Cardiac septum (tissue), 1 donor: ENCODE measurements at regions of chr2 and their contacts with region 1.

Region 1: DNA sequence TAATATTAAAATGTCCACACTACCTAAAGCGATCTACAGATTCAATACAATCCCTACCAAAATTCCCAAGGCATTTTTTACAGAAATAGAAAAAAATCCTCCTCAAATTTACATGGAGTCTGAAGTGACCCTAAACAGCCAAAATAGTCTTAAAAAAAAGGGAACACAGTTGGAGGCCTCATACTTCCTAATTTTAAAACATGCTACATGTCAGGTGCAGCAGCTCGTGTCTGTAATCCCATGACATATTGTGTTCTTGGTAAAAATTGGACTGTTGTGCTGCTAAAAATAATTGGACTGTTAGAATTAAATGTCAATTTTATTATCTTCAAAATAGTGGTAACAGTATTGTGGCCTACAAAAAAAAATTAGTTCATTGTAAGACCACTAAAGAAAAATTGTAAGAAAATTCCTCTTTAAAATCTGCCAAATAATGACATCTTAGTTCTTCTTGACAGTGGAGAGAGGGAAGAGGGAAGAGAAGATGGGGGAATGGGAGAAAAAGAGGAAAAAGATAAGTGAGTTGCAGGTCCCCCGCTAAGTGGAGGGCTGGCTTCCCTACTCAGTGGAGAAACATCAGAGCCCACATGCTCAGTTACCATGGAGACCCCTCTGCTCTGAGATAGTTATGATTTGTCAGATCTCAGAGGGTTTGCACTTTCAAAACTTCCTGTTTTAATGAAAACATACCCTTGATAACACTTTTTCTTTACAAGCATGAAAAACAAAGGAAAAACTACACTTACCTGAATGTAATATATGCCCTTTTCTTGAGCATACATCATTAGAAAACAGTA is 46.5 kb downstream of the UNC50 start:
- DNase-seq: no peak

Region 2: DNA sequence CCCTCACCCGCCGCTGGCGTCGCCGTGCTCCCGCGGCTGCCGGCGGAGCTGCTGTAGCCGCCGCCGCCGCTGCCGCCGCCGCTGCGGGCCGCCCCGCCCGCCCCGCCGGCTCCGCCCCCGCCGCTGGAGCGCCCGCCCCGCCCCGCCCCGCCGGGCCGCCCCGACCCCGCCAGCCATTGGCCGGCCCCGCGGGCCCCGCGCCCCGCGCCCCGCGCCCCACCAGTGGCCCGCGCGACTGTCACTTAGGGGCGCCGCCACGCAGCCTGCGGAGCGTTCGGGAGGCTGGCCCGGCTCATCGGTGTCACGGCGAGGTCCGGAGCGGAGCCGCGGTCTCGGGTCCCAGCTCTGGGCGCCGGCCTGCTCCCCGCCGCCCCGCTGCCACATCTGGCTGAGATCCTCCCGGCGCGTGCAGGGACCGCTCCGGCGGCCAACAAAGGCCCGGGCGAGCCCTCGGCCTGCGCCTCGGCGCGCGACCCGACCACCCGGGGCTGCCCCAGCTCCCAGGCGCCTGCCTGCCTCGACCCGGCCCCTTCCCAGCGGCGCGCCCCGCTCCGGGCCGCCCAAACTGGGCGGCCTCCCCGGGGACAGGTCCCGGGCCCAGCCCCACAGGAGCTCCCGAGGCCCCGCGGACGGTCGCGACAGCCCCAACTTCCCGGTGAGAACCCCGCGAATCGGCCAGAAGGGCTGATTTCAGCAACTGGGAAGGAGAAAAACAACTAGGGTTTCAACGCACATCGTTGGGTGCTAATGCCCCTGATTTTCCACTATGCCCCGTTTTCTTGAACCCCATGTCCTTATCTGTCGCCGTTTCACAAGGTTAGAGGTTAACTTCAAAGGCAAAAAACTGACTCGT is 76.4 kb after region 1 on chr2 and contains the start of gene MGAT4A:
- intact Hi-C with region 1: loop called (anchors 5 kb)
- DNase-seq: peak; percentile 90
- total RNA-seq, gene MGAT4A: 16.3 TPM

Region 3: GRCh38 chr2:99067871-99068625 is 413.2 kb after region 1 on chr2:
- intact Hi-C with region 1: no loop called
- DNase-seq: no peak